ENCODE measurements at regions of chr2 and their contacts with region 1.

Region 1: DNA sequence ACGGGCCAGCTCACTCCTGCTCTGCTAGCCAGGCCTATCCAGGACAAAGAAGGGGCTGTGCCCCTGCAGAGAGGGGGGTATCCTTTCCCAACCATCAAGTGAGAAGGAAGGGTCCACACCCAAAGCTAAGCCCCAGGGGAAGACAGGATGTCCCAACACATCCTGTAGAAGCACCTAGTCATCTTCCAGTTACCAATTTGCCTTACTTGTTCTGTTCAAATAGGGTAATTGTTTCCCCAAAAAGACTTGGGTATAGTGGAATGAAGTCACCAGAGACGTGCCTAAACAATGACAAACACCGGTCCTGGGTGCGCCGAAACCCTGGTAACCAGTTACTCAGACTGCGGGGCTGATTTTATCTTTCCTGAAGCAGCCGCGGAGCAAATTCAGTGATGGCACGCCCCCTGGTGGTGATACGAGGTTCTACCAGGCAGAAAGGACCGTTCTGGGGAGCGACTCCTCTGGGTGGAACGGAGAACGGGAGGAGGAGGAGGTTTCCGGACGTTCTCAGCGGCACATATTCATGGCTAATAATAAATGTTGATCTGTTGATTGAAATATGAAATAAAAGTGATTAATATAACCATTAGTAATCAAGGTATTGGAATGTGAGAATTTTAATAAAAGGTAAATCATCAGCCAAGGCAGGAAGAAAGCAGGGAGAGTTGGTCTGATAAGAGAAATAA is 109.3 kb upstream of the STON1 start:
- DNase-seq: peak; percentile 85 to 95 (median 92)
- H3K4me3 ChIP-seq: peak overlapping the region in 55 of 59 donors; percentile 2 to 58 (median 33)
- H3K27ac ChIP-seq: peak overlapping the region in 56 of 59 donors; percentile 22 to 98 (median 78)
- H3K27me3 ChIP-seq: no peaks in the 10 kb centered on the region
- CTCF ChIP-seq: peak; percentile 93 to 100 (median 99)

Region 2: DNA sequence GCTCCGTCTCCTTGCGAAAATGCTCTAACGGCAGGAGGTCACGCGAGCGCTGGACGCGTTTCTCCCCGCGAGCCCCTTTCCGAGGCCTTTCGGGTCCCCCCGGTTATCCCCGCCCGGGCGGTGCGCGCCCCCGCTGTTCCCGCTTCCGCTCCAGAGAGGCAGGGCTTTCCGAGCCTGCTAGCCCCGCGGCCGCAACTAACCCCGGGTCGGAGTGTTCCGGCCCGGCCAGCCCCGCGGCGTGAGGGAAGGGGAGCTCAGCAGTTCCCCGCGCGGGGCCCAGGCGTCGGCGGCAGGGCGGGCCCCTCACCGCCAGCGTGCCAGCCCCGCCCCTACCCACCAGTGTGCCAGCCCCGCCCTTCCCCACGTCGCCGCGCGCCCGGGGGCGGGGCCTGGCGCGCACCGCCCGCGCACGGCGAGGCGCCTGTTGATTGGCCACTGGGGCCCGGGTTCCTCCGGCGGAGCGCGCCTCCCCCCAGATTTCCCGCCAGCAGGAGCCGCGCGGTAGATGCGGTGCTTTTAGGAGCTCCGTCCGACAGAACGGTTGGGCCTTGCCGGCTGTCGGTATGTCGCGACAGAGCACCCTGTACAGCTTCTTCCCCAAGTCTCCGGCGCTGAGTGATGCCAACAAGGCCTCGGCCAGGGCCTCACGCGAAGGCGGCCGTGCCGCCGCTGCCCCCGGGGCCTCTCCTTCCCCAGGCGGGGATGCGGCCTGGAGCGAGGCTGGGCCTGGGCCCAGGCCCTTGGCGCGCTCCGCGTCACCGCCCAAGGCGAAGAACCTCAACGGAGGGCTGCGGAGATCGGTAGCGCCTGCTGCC is 637.8 kb before region 1 on chr2 and contains the start of gene MSH6:
- intact Hi-C with region 1: loop called in 1 of 2 experiments (anchors 10 kb)
- DNase-seq: peak; percentile 79 to 96 (median 90)
- H3K4me3 ChIP-seq: peak within 1 kb of the TSS; percentile 71 to 98 (median 92)
- H3K27ac ChIP-seq: peak within 1 kb of the TSS; percentile 64 to 97 (median 91)
- H3K27me3 ChIP-seq: no peaks in the 10 kb centered on the region
- CTCF ChIP-seq: peak in 26 of 56 donors; percentile 5 to 57 (median 31)
- total RNA-seq, gene MSH6: 21.9 to 64.7 (median 36.1) TPM